ENCODE measurements at regions of chr2 and their contacts with region 1.

Region 1: DNA sequence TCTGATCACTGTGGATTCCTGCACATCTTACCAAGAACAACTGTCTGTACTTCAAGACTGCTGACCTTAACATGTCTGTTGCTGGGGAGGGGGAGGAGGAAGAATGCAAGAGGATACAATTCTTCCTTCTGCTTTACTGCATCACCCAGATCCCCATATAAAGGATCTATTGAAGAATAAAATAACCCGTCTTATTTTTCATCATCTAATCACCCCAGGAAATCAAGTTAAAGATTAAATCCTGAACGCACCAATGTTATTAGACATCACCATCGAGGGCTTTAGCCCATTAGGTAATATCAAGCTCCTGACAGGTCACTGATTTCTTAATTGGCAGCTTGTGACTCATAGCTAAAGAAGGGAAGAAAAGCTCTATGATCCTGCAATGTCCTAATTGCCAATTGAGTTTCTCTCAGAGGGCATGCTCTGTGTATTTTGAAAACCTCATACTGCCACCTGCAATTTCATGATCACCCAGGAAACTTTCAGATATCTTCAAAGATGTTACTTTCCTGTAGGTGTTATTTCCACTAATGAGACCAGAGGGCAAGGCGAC is 75.4 kb upstream of the KCNE4 start:
- DNase-seq: no peak
- ATAC-seq: no peak
- H3K4me3 ChIP-seq: no peak overlapping the region
- H3K27ac ChIP-seq: no peak overlapping the region
- H3K4me1 ChIP-seq: peaks cover 0 to 8% (median 0%) of the 10 kb centered on the region in 12 donors
- H3K27me3 ChIP-seq: no peaks in the 10 kb centered on the region
- CTCF ChIP-seq: no peak
- POLR2A ChIP-seq: no peak

Region 2: GRCh38 chr2:223101340-223102039 is 124.9 kb after region 1 on chr2:
- intact Hi-C with region 1: loop called in 6 of 10 experiments (anchors 5 kb)
- DNase-seq: no peak
- ATAC-seq: peak in 3 of 4 donors; percentile 52 to 69 (median 61)
- H3K4me3 ChIP-seq: no peak overlapping the region
- H3K27ac ChIP-seq: peak overlapping the region in 6 of 12 donors; percentile 2 to 57 (median 23)
- H3K4me1 ChIP-seq: peaks cover 0 to 24% (median 6%) of the 10 kb centered on the region in 12 donors
- H3K27me3 ChIP-seq: no peaks in the 10 kb centered on the region
- CTCF ChIP-seq: peak in 11 of 12 donors; percentile 10 to 48 (median 34)
- POLR2A ChIP-seq: no peak

Region 3: GRCh38 chr2:223465793-223466192 is 489.2 kb after region 1 on chr2:
- intact Hi-C with region 1: loop called in 2 of 10 experiments (anchors 5 to 10 kb)
- DNase-seq: peak; percentile 52 to 85 (median 65)
- ATAC-seq: peak; percentile 54 to 97 (median 89)
- H3K4me3 ChIP-seq: no peak overlapping the region
- H3K27ac ChIP-seq: peak overlapping the region in 1 of 12 donors; percentile 56
- H3K4me1 ChIP-seq: peaks cover 0 to 32% (median under 1%) of the 10 kb centered on the region in 12 donors
- H3K27me3 ChIP-seq: no peaks in the 10 kb centered on the region
- CTCF ChIP-seq: no peak
- POLR2A ChIP-seq: no peak

Region 4: DNA sequence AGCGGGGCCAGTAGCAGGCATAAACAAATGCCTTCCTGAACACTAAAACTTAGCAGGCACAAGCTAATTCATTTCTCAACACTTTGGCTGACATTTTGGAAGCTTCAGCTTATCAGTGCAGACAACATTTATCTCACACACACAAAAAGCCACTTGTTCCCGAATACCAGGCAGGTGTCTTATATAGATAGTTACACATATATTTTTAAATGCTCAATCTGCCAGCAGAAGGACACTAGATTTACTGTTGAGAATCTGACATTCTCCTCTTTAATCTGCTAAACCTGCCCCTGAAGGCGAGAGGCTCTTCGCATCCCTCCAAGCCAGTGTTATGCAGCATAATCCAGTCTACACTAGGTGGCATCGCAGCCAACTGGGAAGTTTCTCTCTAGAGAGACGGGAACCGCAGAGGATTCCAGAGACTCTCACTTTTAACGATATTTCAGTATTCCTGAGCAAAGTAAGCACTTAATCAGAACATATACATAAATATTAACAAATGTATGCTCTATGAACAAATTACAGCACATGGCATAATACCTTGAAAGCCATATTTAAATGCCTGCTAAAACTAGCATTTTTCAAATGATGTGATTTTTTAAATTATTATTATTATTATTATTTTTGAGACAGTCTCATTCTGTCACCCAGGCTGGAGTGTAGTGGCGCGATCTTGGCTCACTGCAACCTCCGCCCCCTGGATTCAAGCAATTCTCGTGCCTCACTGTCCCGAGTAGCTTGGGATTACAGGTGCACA is 715.8 kb after region 1 on chr2:
- intact Hi-C with region 1: loop called in 1 of 10 experiments (anchors 5 kb)
- DNase-seq: peak in 3 of 5 donors; percentile 16 to 35 (median 21)
- ATAC-seq: peak in 3 of 4 donors; percentile 69 to 83 (median 79)
- H3K4me3 ChIP-seq: no peak overlapping the region
- H3K27ac ChIP-seq: no peak overlapping the region
- H3K4me1 ChIP-seq: no peaks in the 10 kb centered on the region
- H3K27me3 ChIP-seq: peaks cover 0 to 6% (median 0%) of the 10 kb centered on the region in 9 donors
- CTCF ChIP-seq: peak; percentile 30 to 70 (median 58)
- POLR2A ChIP-seq: no peak